MCF 10A (cell line): ENCODE measurements at regions of chr5 and their contacts with region 1.

Region 1: DNA sequence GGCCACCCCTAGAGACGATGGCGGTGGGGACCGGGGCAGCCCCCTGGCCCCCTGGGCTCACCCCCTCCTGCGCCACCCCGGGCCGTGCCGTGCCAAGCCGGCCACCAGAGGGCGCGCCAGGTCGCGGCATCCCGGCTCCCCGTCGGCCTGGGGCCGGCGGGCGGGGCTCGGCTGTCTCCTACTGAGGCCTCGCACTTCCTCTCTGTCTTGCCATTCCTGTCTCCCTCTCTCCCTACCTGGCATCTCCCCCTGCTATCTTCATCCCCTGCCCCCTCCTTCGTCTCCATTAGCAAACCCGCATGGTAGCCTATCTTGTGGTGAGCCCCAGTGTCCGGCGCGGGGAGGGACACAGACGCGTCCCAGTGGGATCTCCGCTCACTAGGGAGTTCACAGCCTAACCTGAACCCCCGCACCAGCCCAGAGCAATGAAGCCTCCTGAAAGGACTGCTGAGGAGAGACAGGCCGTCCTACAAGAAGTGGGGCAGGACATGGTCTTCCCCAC is 29.8 kb upstream of the FABP6 start:
- DNase-seq: peak; percentile 66
- H3K4me3 Mint-ChIP-seq: peak overlapping the region; percentile 6
- H3K27ac Mint-ChIP-seq: no peak overlapping the region
- H3K4me1 Mint-ChIP-seq: peaks cover 5% of the 10 kb centered on the region
- H3K27me3 Mint-ChIP-seq: peaks cover 10% of the 10 kb centered on the region
- CTCF ChIP-seq: peak; percentile 100

Region 2: DNA sequence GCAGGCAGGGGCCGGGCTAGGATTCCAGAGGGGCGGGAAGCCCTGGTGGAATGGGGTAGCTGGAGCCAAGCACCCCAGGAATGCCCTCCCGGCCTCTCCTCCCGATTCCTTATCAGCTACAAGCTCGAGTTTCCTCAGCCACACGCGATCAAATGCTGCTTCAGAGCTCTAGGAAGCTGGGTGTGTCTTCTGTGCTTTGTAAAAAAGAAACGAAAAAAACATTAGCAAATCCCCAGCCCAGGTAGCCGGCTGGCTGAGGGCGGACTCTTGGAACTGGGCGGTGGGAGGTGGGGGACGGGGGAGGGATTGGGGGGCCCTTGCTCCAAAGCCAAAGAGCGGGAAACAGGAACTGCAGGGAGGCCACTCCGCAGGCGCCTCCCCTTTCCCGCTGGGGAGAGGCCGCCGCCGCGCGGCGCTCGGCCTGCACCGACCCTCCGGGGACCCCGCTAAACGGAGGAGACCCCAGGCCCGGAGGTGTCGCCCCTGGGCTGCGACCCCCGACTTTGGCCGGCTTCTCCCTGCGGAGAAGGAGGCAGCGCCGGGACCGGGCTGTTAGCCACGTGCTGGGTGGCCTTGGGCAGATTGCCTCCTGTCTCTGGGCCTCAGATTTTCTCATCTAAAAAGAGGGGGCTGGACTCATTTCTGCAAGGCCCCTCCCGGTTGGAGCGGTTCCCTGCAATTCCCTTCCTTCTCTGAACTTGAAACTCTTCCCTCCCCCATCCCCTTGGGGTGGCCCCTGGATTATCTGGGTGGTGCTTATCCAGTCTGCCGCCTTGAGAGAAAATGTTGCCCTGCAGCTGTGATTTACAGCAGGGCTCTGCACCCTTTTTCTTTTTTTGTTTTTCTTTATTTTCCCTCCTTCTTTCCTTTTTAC is 11.1 kb before region 1 on chr5:
- CTCF ChIA-PET with region 1: interaction called, 16 read pairs
- POLR2A ChIA-PET with region 1: interaction called, 4 read pairs
- intact Hi-C with region 1: no loop called
- DNase-seq: no peak
- H3K4me3 Mint-ChIP-seq: no peak overlapping the region
- H3K27ac Mint-ChIP-seq: no peak overlapping the region
- H3K4me1 Mint-ChIP-seq: peaks cover under 1% of the 10 kb centered on the region
- H3K27me3 Mint-ChIP-seq: no peaks in the 10 kb centered on the region
- CTCF ChIP-seq: no peak

Region 3: GRCh38 chr5:160230686-160231527 is 31.4 kb after region 1 on chr5:
- CTCF ChIA-PET with region 1: interaction called, 10 read pairs
- POLR2A ChIA-PET with region 1: no interaction called
- intact Hi-C with region 1: no loop called
- DNase-seq: peak; percentile 76
- H3K4me3 Mint-ChIP-seq: no peak overlapping the region
- H3K27ac Mint-ChIP-seq: no peak overlapping the region
- H3K4me1 Mint-ChIP-seq: peaks cover 6% of the 10 kb centered on the region
- H3K27me3 Mint-ChIP-seq: no peaks in the 10 kb centered on the region
- CTCF ChIP-seq: no peak

Region 4: DNA sequence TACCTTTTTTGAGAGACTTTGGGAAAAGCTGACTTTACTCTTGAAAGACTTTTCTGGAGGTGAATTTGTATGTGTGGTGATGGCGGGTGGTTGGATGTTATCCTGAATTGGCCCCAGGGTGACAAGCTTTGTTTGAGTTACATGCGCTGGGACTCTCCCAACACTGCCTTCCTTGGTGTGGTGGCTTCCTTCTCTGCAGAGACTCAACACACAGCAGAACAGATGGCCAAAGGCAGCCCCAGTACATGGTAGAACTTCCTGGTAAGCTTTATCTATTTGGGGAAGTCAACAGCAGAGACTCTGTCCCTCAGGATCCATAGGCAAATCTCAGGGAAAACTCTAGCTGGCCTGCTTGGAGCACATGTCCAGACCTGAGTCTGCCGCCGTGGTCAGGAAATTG is 152.8 kb after region 1 on chr5:
- CTCF ChIA-PET with region 1: interaction called, 317 read pairs
- POLR2A ChIA-PET with region 1: no interaction called
- intact Hi-C with region 1: no loop called
- DNase-seq: no peak
- H3K4me3 Mint-ChIP-seq: no peak overlapping the region
- H3K27ac Mint-ChIP-seq: no peak overlapping the region
- H3K4me1 Mint-ChIP-seq: no peaks in the 10 kb centered on the region
- H3K27me3 Mint-ChIP-seq: no peaks in the 10 kb centered on the region
- CTCF ChIP-seq: no peak